Natural killer cell (primary cell): ENCODE measurements at regions of chr16 and their contacts with region 1.

Region 1: DNA sequence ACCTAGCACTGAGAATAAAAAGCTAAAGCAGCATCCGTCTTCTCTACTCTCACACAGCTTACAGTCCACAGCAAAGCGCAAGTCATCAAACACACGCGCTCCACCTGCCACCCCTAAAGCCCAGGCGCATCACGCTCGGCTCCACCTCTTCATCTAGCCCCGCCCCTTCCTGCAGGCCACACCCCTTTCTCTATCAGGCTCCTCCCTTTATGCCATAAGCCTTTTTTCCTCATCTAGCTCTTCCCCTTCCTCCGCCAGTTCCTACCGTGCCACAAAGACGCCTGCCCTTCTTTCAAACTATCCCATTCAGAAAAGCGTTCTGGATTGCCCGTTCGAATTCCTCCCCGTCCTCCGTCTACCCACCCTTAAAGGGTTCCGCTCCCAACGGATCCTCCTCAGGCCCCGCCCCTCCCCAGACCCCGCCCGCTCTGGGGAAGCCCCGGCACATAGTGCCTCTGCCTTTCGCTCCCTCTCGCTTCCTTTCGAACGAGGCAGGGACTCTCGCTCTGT is 417 bp downstream of the C16orf46 start:
- DNase-seq: peak; percentile 96
- ATAC-seq: peak; percentile 85 to 93 (median 87)
- H3K4me3 ChIP-seq: peak overlapping the region; percentile 65
- H3K4me3 Mint-ChIP-seq: no peak overlapping the region
- H3K27ac ChIP-seq: peak overlapping the region; percentile 99
- H3K27ac Mint-ChIP-seq: no peak overlapping the region
- H3K4me1 ChIP-seq: peaks cover 13% of the 10 kb centered on the region
- H3K4me1 Mint-ChIP-seq: no peaks in the 10 kb centered on the region
- H3K27me3 ChIP-seq: no peaks in the 10 kb centered on the region
- H3K27me3 Mint-ChIP-seq: peaks cover 5 to 21% of the 10 kb centered on the region in 2 donors
- CTCF ChIP-seq: no peak

Region 2: GRCh38 chr16:81006814-81007696 is 69.6 kb before region 1 on chr16 and contains the starts of genes CENPN and CMC2:
- intact Hi-C with region 1: loop called (anchors 1 kb)
- DNase-seq: peak; percentile 99
- ATAC-seq: peak; percentile 78 to 91 (median 79)
- H3K4me3 ChIP-seq: peak within 1 kb of the TSS; percentile 74
- H3K4me3 Mint-ChIP-seq: peak within 1 kb of the TSS; percentile 99
- H3K27ac ChIP-seq: peak within 1 kb of the TSS; percentile 99
- H3K27ac Mint-ChIP-seq: peak within 1 kb of the TSS; percentile 97 to 99
- H3K4me1 ChIP-seq: peaks cover 32% of the 10 kb centered on the region
- H3K4me1 Mint-ChIP-seq: peaks cover 35 to 36% of the 10 kb centered on the region in 2 donors
- H3K27me3 ChIP-seq: no peaks in the 10 kb centered on the region
- H3K27me3 Mint-ChIP-seq: no peaks in the 10 kb centered on the region
- CTCF ChIP-seq: no peak
- total RNA-seq, gene CENPN: 6.6 to 11.6 (median 9.0) TPM
- total RNA-seq, gene CMC2: 52.3 to 63.5 (median 63.2) TPM

Region 3: GRCh38 chr16:81035398-81035974 is 41.1 kb before region 1 on chr16 and contains the start of gene ATMIN:
- intact Hi-C with region 1: loop called (anchors 1 kb)
- DNase-seq: peak; percentile 89 to 95
- ATAC-seq: peak; percentile 98
- H3K4me3 ChIP-seq: peak within 1 kb of the TSS; percentile 38
- H3K4me3 Mint-ChIP-seq: peak within 1 kb of the TSS; percentile 86
- H3K27ac ChIP-seq: no peak within 1 kb of the TSS
- H3K27ac Mint-ChIP-seq: peak within 1 kb of the TSS; percentile 45 to 55
- H3K4me1 ChIP-seq: peaks cover 15% of the 10 kb centered on the region
- H3K4me1 Mint-ChIP-seq: peaks cover 24 to 26% of the 10 kb centered on the region in 2 donors
- H3K27me3 ChIP-seq: no peaks in the 10 kb centered on the region
- H3K27me3 Mint-ChIP-seq: no peaks in the 10 kb centered on the region
- CTCF ChIP-seq: peak; percentile 98
- total RNA-seq, gene ATMIN: 35.3 to 51.8 (median 39.9) TPM

Region 4: DNA sequence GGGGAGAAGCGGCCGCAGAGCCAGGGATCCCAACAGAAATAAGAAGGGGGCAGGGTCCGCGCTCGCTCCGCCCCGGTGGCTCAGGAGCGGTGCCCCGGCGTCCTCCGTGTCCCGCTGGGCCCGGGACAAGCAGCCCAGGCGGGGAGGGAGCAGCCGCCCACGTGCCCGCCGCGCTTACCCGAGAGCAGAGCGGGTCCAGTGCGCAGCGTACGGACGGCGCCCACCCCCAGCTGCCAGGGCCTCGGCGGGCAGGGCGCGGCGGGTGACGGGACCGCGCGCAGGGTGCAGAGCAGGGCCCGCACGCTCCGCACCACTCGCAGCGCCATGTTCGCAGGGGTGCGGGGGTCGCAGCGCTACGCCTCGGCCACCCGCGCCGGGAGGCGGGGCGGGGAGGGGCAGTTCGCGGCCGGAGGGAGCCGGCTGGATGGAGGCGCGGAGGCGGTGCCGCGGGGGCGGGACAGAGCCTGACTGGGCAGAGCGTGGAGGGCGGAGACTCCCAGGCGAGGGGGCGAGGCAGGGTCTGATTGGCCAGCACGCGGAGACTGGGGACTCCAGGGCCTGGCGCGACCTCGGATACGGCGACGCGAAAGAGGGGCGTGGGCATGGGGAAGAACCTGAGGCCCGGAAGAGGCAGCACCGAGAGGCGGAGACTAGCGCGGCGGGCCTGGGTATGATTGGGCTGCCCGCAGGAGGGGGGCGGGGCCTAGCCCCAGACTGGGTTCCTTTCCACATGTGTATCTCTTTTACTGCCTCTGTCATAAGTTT is 19.5 kb after region 1 on chr16 and contains the start of gene GCSH:
- intact Hi-C with region 1: loop called (anchors 1 kb)
- DNase-seq: peak; percentile 98 to 99
- ATAC-seq: peak; percentile 96 to 99 (median 96)
- H3K4me3 ChIP-seq: peak within 1 kb of the TSS; percentile 43
- H3K4me3 Mint-ChIP-seq: peak within 1 kb of the TSS; percentile 91
- H3K27ac ChIP-seq: peak within 1 kb of the TSS; percentile 19
- H3K27ac Mint-ChIP-seq: peak within 1 kb of the TSS; percentile 72 to 84
- H3K4me1 ChIP-seq: peaks cover 8% of the 10 kb centered on the region
- H3K4me1 Mint-ChIP-seq: peaks cover 6% of the 10 kb centered on the region in 2 donors
- H3K27me3 ChIP-seq: no peaks in the 10 kb centered on the region
- H3K27me3 Mint-ChIP-seq: no peaks in the 10 kb centered on the region
- CTCF ChIP-seq: no peak
- total RNA-seq, gene GCSH: 2.6 to 4.3 (median 2.7) TPM

Region 5: DNA sequence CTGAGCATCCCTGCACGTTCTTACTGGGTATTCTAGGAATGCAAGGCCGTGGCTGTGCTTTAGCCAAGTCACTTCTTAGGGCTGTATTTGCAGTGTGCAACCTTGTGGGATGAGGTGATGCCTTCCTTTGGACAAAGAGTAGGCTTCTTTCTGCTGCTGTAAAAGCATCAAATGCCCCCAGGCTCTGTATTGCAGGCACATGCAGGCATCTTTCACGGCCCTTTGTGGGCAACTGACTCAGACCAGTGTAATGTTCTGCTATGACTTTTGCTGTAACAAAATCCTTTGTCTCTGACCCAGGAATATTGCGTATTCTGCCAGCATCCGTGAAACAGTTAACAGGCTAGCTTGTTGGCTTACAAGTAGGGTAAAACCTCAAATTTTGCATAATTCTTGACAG is 50.4 kb after region 1 on chr16:
- intact Hi-C with region 1: no loop called
- DNase-seq: no peak
- ATAC-seq: no peak
- H3K4me3 ChIP-seq: no peak overlapping the region
- H3K4me3 Mint-ChIP-seq: no peak overlapping the region
- H3K27ac ChIP-seq: no peak overlapping the region
- H3K27ac Mint-ChIP-seq: no peak overlapping the region
- H3K4me1 ChIP-seq: no peaks in the 10 kb centered on the region
- H3K4me1 Mint-ChIP-seq: no peaks in the 10 kb centered on the region
- H3K27me3 ChIP-seq: no peaks in the 10 kb centered on the region
- H3K27me3 Mint-ChIP-seq: peaks cover 0 to 2% of the 10 kb centered on the region in 2 donors
- CTCF ChIP-seq: no peak

Region 6: GRCh38 chr16:81279395-81279794 is 202.8 kb after region 1 on chr16:
- intact Hi-C with region 1: no loop called
- DNase-seq: no peak
- ATAC-seq: no peak
- H3K4me3 ChIP-seq: no peak overlapping the region
- H3K4me3 Mint-ChIP-seq: no peak overlapping the region
- H3K27ac ChIP-seq: no peak overlapping the region
- H3K27ac Mint-ChIP-seq: no peak overlapping the region
- H3K4me1 ChIP-seq: no peaks in the 10 kb centered on the region
- H3K4me1 Mint-ChIP-seq: no peaks in the 10 kb centered on the region
- H3K27me3 ChIP-seq: no peaks in the 10 kb centered on the region
- H3K27me3 Mint-ChIP-seq: no peaks in the 10 kb centered on the region
- CTCF ChIP-seq: no peak